Caco-2 (cell line): ENCODE measurements at regions of chr15 and their contacts with region 1.

Region 1: GRCh38 chr15:72460394-72460793 is 13.7 kb upstream of the ARIH1 start:
- DNase-seq: no peak
- H3K4me3 ChIP-seq: no peak overlapping the region
- H3K4me3 Mint-ChIP-seq: no peak overlapping the region
- H3K27ac Mint-ChIP-seq: no peak overlapping the region
- H3K4me1 ChIP-seq: no peaks in the 10 kb centered on the region
- H3K4me1 Mint-ChIP-seq: no peaks in the 10 kb centered on the region
- H3K27me3 ChIP-seq: no peaks in the 10 kb centered on the region
- H3K27me3 Mint-ChIP-seq: no peaks in the 10 kb centered on the region
- CTCF ChIP-seq: no peak

Region 2: DNA sequence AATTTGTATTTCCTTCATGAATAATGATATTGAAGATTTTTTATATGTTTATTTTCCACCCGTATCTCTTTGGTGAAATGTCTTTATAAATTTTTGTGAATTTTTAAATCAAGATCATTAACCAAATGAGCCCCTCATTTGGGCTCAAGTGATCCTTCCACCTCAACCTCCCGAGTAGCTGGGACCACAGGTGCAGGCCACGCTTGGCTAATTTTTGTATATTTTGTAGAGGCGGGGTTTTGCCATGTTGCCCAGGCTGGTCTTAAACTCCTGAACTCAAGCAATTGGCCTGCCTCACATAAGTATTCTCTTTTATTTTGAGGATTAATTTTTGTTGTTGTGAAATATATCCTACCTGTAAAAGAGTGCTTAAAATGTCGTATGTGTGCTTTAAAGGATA is 230.5 kb after region 1 on chr15:
- CTCF ChIA-PET with region 1: no interaction called
- POLR2A ChIA-PET with region 1: no interaction called
- intact Hi-C with region 1: no loop called
- DNase-seq: no peak
- H3K4me3 ChIP-seq: no peak overlapping the region
- H3K4me3 Mint-ChIP-seq: no peak overlapping the region
- H3K27ac Mint-ChIP-seq: no peak overlapping the region
- H3K4me1 ChIP-seq: no peaks in the 10 kb centered on the region
- H3K4me1 Mint-ChIP-seq: no peaks in the 10 kb centered on the region
- H3K27me3 ChIP-seq: no peaks in the 10 kb centered on the region
- H3K27me3 Mint-ChIP-seq: no peaks in the 10 kb centered on the region
- CTCF ChIP-seq: no peak

Region 3: GRCh38 chr15:72770673-72771328 is 310.4 kb after region 1 on chr15:
- CTCF ChIA-PET with region 1: no interaction called
- POLR2A ChIA-PET with region 1: interaction called, 13 read pairs
- intact Hi-C with region 1: no loop called
- DNase-seq: no peak
- H3K4me3 ChIP-seq: no peak overlapping the region
- H3K4me3 Mint-ChIP-seq: no peak overlapping the region
- H3K27ac Mint-ChIP-seq: no peak overlapping the region
- H3K4me1 ChIP-seq: no peaks in the 10 kb centered on the region
- H3K4me1 Mint-ChIP-seq: no peaks in the 10 kb centered on the region
- H3K27me3 ChIP-seq: no peaks in the 10 kb centered on the region
- H3K27me3 Mint-ChIP-seq: no peaks in the 10 kb centered on the region
- CTCF ChIP-seq: peak in 1 of 2 experiments; percentile 30